Tibial artery (tissue), 4 donors: ENCODE measurements at regions of chr2 and their contacts with region 1.

Region 1: GRCh38 chr2:21627938-21628337 is 504.2 kb downstream of the TDRD15 start:
- DNase-seq: no peak
- H3K4me3 ChIP-seq: no peak overlapping the region
- H3K27ac ChIP-seq: no peak overlapping the region
- H3K4me1 ChIP-seq: no peaks in the 10 kb centered on the region
- H3K27me3 ChIP-seq: no peaks in the 10 kb centered on the region
- CTCF ChIP-seq: no peak

Region 2: GRCh38 chr2:21461754-21462240 is 166.1 kb before region 1 on chr2:
- intact Hi-C with region 1: no loop called
- DNase-seq: no peak
- H3K4me3 ChIP-seq: no peak overlapping the region
- H3K27ac ChIP-seq: no peak overlapping the region
- H3K4me1 ChIP-seq: no peaks in the 10 kb centered on the region
- H3K27me3 ChIP-seq: no peaks in the 10 kb centered on the region
- CTCF ChIP-seq: no peak

Region 3: GRCh38 chr2:21591926-21592325 is 36.0 kb before region 1 on chr2:
- intact Hi-C with region 1: loop called (anchors 2 kb)
- DNase-seq: no peak
- H3K4me3 ChIP-seq: no peak overlapping the region
- H3K27ac ChIP-seq: no peak overlapping the region
- H3K4me1 ChIP-seq: no peaks in the 10 kb centered on the region
- H3K27me3 ChIP-seq: no peaks in the 10 kb centered on the region
- CTCF ChIP-seq: no peak